Activated CD4-positive, alpha-beta memory T cell treated with anti-CD3 and anti-CD28 coated beads, Interleukin-2, amount 10 ng/mL, durations not matched to agents 7 days and 5 days (primary cell): ENCODE measurements at regions of chr3 and their contacts with region 1.

Region 1: GRCh38 chr3:50292159-50293078 is at the start of gene IFRD2:
- DNase-seq: peak; percentile 97
- H3K4me3 Mint-ChIP-seq: peak within 1 kb of the TSS; percentile 81
- H3K27ac Mint-ChIP-seq: peak within 1 kb of the TSS; percentile 91
- H3K4me1 Mint-ChIP-seq: peaks cover 38% of the 10 kb centered on the region
- H3K27me3 Mint-ChIP-seq: no peaks in the 10 kb centered on the region
- total RNA-seq, gene IFRD2: 40.6 to 45.0 TPM

Region 2: GRCh38 chr3:50272911-50273693 is 19.3 kb before region 1 on chr3:
- CTCF ChIA-PET with region 1: interaction called, 10 read pairs
- POLR2A ChIA-PET with region 1: interaction called, 6 read pairs
- DNase-seq: peak; percentile 90
- H3K4me3 Mint-ChIP-seq: peak overlapping the region; percentile 62
- H3K27ac Mint-ChIP-seq: no peak overlapping the region
- H3K4me1 Mint-ChIP-seq: peaks cover 33% of the 10 kb centered on the region
- H3K27me3 Mint-ChIP-seq: peaks cover 49% of the 10 kb centered on the region

Region 3: GRCh38 chr3:50321336-50322114 is 29.1 kb after region 1 on chr3:
- CTCF ChIA-PET with region 1: interaction called, 82 read pairs
- POLR2A ChIA-PET with region 1: interaction called, 113 read pairs
- DNase-seq: peak; percentile 85
- H3K4me3 Mint-ChIP-seq: peak overlapping the region; percentile 72
- H3K27ac Mint-ChIP-seq: peak overlapping the region; percentile 83
- H3K4me1 Mint-ChIP-seq: peaks cover 48% of the 10 kb centered on the region
- H3K27me3 Mint-ChIP-seq: no peaks in the 10 kb centered on the region

Region 4: GRCh38 chr3:50327943-50328691 is 35.7 kb after region 1 on chr3 and contains the start of gene TUSC2:
- CTCF ChIA-PET with region 1: interaction called, 82 read pairs
- POLR2A ChIA-PET with region 1: interaction called, 150 read pairs
- DNase-seq: peak; percentile 97
- H3K4me3 Mint-ChIP-seq: peak within 1 kb of the TSS; percentile 93
- H3K27ac Mint-ChIP-seq: peak within 1 kb of the TSS; percentile 79
- H3K4me1 Mint-ChIP-seq: peaks cover 46% of the 10 kb centered on the region
- H3K27me3 Mint-ChIP-seq: no peaks in the 10 kb centered on the region
- total RNA-seq, gene TUSC2: 16.8 to 17.9 TPM